CD4-positive, alpha-beta T cell (primary cell): ENCODE measurements at regions of chr7 and their contacts with region 1.

Region 1: GRCh38 chr7:151491859-151492258 is 27.8 kb downstream of the RHEB start:
- DNase-seq: no peak
- ATAC-seq: no peak
- H3K4me3 ChIP-seq: no peak overlapping the region
- H3K4me3 Mint-ChIP-seq: no peak overlapping the region
- H3K27ac ChIP-seq: no peak overlapping the region
- H3K27ac Mint-ChIP-seq: no peak overlapping the region
- H3K4me1 ChIP-seq: peaks cover 4% of the 10 kb centered on the region
- H3K4me1 Mint-ChIP-seq: peaks cover 36% of the 10 kb centered on the region
- H3K27me3 ChIP-seq: no peaks in the 10 kb centered on the region
- H3K27me3 Mint-ChIP-seq: no peaks in the 10 kb centered on the region
- CTCF ChIP-seq: no peak

Region 2: DNA sequence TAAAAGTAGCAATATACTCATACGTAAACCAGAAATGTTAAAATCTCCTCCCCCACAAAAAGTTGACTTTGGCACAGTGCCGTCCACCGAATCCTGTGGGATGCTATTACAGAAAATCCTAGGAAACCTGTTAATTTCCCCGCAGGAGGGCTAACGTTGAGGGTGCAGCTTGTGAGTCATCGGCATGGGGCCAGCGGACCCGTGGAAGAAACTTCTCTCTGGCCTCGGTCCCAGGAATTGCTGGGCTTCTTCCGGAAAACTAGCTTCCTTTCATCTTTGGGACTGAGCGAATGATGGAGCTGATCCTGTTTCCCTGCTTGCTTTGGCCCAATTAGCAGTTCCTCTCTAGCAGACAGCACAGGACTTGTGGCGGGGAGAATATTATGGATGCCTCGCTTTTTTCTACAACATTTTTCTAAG is 65.4 kb before region 1 on chr7:
- CTCF ChIA-PET with region 1: no interaction called
- POLR2A ChIA-PET with region 1: no interaction called
- intact Hi-C with region 1: no loop called
- DNase-seq: no peak
- ATAC-seq: no peak
- H3K4me3 ChIP-seq: no peak overlapping the region
- H3K4me3 Mint-ChIP-seq: no peak overlapping the region
- H3K27ac ChIP-seq: no peak overlapping the region
- H3K27ac Mint-ChIP-seq: no peak overlapping the region
- H3K4me1 ChIP-seq: peaks cover 51% of the 10 kb centered on the region
- H3K4me1 Mint-ChIP-seq: peaks cover 38% of the 10 kb centered on the region
- H3K27me3 ChIP-seq: no peaks in the 10 kb centered on the region
- H3K27me3 Mint-ChIP-seq: no peaks in the 10 kb centered on the region
- CTCF ChIP-seq: no peak

Region 3: GRCh38 chr7:151477867-151478266 is 14.0 kb before region 1 on chr7:
- CTCF ChIA-PET with region 1: no interaction called
- POLR2A ChIA-PET with region 1: no interaction called
- intact Hi-C with region 1: loop called in 1 of 2 experiments (anchors 1 kb)
- DNase-seq: no peak
- ATAC-seq: no peak
- H3K4me3 ChIP-seq: no peak overlapping the region
- H3K4me3 Mint-ChIP-seq: no peak overlapping the region
- H3K27ac ChIP-seq: no peak overlapping the region
- H3K27ac Mint-ChIP-seq: no peak overlapping the region
- H3K4me1 ChIP-seq: peaks cover 5% of the 10 kb centered on the region
- H3K4me1 Mint-ChIP-seq: peaks cover 17% of the 10 kb centered on the region
- H3K27me3 ChIP-seq: no peaks in the 10 kb centered on the region
- H3K27me3 Mint-ChIP-seq: no peaks in the 10 kb centered on the region
- CTCF ChIP-seq: no peak